GM13976 (cell line): ENCODE measurements at regions of chr7 and their contacts with region 1.

Region 1: DNA sequence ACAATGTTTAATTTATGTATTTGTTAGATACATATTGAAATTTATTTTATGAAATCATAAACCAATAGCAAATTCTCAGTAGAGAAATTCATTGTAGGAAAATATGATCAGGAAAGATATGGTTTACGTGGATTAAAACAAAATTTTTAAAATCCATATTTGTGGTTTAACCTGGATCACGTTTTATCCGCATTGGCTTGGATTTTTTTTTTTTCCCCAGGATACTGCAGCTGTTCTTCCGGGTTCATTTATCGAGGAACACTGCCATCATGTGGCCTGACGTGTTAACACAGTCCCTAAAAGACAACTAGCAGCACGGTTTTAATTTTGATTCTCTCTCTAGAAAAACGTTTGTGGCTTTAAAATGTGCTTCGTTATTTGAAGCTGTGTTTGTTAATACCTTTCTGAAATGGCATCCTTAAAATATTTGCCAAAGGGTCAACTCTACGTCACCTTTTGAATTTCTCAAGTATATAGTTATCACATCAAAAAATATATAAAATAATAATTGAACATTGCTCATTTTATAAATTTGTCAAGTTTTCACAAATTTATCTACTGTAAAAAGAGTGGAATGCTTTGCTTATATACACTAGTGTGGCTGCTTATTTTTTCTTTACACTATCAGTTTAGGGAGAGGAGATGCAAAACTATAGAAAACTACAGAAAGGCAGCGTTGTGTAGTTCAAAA is 8.7 kb upstream of the ASB4 start:
- DNase-seq: peak; percentile 41
- CTCF ChIP-seq: peak; percentile 62

Region 2: GRCh38 chr7:94452239-94452638 is 1024.8 kb before region 1 on chr7:
- in situ Hi-C with region 1: loop called (anchors 25 kb)
- DNase-seq: no peak
- CTCF ChIP-seq: no peak

Region 3: DNA sequence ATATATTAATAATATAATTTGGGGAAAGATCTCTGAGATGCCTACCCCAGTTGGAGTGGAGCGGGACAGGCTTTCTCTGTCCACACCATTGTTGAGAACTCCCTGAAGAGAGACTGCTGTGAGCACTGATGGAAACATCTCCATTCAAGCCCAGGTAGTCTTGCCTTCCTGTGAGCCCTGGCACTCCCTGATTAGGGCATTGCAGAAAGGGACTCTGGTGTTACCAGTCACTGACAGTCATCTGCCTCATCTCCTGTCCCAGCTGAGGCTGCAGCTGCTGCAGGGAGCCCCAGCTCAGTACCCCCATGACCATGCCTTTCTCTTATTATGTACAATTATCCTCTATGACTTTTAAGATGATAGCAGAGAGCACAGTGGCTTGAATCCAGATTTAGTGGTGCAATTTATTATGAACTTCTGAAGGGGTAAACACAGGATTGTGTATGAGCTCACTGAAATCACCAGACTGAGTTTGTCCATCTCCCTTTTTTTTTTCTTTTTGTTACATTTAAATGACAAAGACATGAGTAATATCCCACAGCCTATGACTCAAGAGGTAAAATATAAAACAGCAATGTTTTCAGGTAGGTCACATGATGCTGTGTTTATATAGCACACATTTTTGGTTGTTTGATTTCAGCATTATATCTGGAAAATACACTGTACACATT is 608.0 kb after region 1 on chr7:
- in situ Hi-C with region 1: no loop called
- DNase-seq: no peak
- CTCF ChIP-seq: no peak